BJ (cell line): ENCODE measurements at regions of chr1 and their contacts with region 1.

Region 1: GRCh38 chr1:198756470-198756869 is 117.6 kb downstream of the PTPRC start:
- DNase-seq: no peak
- H3K4me3 ChIP-seq: no peak overlapping the region
- H3K27me3 ChIP-seq: no peaks in the 10 kb centered on the region
- CTCF ChIP-seq: 0 out of 2 replicates have a peak, but pooled peaks have one; percentile 7

Region 2: GRCh38 chr1:199113265-199113869 is 356.9 kb after region 1 on chr1:
- CTCF ChIA-PET with region 1: interaction called, 17 read pairs
- POLR2A ChIA-PET with region 1: no interaction called
- DNase-seq: no peak
- H3K4me3 ChIP-seq: no peak overlapping the region
- H3K27me3 ChIP-seq: no peaks in the 10 kb centered on the region
- CTCF ChIP-seq: peak; percentile 89

Region 3: DNA sequence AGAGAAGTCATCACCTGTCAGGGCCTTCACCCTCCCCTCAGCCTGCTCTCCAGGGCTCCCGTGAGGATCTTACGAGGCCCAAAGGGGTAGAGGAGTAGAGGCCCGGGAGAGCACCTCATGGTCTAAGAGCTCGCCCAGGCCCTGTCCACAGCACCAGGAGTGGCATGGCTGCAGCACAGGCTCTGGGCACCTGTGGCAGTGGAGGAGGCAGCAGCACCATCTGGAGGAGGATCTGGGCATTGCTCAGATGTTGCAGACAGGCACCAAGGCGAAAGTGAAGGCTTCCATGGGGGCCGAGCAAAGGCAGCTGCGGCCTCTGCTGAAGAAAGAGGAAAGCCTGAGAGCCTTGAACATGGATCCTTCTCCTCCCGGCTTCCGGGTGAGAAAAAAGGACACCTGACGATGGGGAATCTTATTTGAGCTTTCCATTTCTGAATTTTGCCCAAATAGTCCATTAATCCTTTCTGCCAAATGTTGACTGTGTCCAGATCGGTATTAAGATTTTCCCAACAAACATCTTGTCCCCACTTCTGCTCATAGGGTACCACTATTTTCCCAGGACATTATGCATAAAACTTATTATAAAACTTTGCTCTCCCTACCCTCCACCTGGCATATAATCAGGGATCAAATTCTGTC is 487.1 kb after region 1 on chr1:
- CTCF ChIA-PET with region 1: interaction called, 10 read pairs
- POLR2A ChIA-PET with region 1: no interaction called
- DNase-seq: no peak
- H3K4me3 ChIP-seq: no peak overlapping the region
- H3K27me3 ChIP-seq: no peaks in the 10 kb centered on the region
- CTCF ChIP-seq: peak; percentile 67

Region 4: DNA sequence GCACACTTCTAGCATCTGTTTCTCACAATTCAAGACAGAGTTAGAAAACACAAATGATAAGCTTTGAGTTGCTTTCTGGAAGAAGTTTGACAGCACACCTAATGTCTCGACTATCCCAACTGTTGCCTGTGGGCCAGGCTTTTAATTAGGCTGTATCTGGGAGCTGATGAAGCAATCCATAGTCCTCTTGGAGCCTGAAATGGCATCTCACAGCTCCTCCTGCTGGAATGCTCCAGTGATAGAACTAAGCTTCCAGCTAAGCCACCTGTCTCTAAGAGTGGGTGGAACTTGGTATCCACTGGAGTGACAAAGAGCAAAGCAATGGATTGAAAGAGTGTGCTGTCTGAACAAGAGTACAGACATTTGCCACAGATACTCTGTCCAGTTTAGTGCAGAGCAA is 665.7 kb after region 1 on chr1:
- CTCF ChIA-PET with region 1: interaction called, 15 read pairs
- POLR2A ChIA-PET with region 1: no interaction called
- DNase-seq: peak; percentile 3
- H3K4me3 ChIP-seq: no peak overlapping the region
- H3K27me3 ChIP-seq: no peaks in the 10 kb centered on the region
- CTCF ChIP-seq: peak; percentile 65